Activated T-helper 2 cell treated with anti-CD3 and anti-CD28 coated beads, Interferon-gamma antibody, Interleukin-2, Interleukin-4, amounts not matched to agents 10 μg/mL and 5 μg/mL and 100 μg/mL, durations not matched to agents 14 hours and 24 hours and 36 hours (primary cell): ENCODE measurements at regions of chr15 and their contacts with region 1.

Region 1: DNA sequence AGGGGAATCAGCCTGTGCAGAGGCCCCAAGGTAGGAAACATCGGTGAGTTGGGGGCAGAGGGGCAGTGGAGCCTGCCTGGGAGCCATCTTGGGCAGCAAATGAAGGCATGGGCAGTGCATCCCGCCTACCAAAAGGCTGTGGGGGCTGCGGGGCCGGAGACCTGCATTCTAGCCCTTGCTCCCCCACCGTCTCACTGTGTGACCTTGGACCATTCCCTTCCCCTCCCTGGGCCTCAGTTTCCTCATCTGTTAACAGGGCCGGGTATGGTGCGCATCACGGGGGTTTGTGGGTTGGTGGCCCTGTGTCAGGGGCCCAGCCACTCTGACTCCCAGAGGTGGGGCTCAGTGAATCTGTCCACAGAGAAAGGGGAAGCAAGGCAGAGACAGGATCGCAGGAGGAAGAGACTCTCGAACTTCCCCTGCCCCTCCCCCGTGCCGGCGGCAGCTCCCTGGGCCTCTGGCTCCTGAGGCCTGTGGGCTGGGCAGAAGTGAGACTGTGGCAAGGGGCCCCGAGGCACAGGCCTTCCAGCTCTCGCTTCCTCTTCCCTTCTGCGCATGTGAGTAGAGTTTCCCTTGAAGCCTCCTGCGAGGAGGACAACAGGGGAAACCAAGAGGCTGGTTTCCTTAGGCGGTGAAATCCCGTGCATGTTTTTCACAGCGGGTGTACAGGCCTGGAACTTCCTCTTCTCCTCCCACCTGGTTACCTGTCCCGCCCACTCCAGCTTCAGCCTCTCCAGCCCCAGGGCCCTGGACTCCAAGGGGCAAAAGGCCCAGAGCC is 42.9 kb downstream of the IDH2 start:
- DNase-seq: peak; percentile 67
- H3K4me3 Mint-ChIP-seq: no peak overlapping the region
- H3K27ac Mint-ChIP-seq: peak overlapping the region; percentile 78
- H3K4me1 Mint-ChIP-seq: peaks cover 42% of the 10 kb centered on the region
- H3K27me3 Mint-ChIP-seq: no peaks in the 10 kb centered on the region

Region 2: DNA sequence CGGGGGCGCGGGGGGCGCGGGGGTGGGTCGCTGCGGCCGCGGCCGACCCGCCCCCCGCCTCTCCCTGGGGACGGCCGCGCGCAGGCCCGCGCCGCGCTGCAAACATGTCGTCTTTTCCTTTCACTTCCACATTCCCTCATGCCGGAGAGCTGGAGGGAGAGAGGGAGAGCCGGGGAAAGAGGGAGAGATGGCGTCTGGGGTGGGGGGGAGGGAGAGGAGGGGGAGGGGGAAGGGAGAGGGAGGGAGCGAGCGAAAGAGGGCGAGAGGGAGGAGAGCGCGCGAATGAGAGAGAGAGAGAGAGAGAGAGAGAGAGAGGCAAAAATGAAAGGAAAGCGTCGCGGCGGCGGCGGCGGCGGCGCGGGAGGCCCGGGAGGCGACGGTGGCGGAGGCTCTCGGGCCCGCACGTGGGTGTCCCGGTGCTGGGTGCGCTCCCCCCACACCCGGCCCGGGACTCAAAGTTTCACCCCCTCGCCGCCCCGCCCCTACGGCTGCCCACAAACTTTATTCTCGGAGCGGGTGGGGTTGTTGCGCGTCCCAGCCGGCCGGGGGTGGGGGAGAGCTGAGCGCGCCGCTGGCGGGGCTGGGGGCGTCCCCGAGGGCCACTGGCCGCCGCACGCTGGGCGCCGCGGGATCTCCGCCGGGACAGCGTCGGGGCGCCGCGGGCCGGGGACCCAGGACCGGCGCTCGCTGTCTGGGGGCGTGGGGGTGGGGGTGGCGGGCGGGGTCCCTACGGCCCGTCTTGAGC is 57.5 kb before region 1 on chr15:
- intact Hi-C with region 1: loop called (anchors 1 kb)
- DNase-seq: peak; percentile 60
- H3K4me3 Mint-ChIP-seq: peak overlapping the region; percentile 85
- H3K27ac Mint-ChIP-seq: peak overlapping the region; percentile 87
- H3K4me1 Mint-ChIP-seq: peaks cover 50% of the 10 kb centered on the region
- H3K27me3 Mint-ChIP-seq: no peaks in the 10 kb centered on the region

Region 3: DNA sequence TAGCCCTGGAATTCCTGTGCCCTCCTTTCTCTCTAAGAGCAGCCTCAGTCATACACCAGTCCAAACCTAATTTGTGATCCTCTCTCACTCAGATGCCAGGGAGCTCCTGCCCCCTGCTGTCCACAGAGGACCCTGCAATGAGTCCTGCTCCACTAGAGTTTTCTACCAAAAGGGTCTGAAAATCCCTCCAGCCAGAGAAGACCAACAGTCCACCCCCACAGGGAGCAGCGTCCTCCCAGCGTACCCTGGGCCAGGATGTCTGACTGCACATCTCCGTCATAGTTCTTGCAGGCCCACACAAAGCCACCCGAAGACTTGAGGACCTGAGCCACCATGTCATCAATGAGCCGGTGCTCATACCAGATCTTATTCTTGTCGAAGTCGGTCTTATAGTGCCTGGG is 27.5 kb after region 1 on chr15:
- intact Hi-C with region 1: loop called (anchors 1 kb)
- DNase-seq: no peak
- H3K4me3 Mint-ChIP-seq: no peak overlapping the region
- H3K27ac Mint-ChIP-seq: no peak overlapping the region
- H3K4me1 Mint-ChIP-seq: peaks cover 9% of the 10 kb centered on the region
- H3K27me3 Mint-ChIP-seq: no peaks in the 10 kb centered on the region

Region 4: DNA sequence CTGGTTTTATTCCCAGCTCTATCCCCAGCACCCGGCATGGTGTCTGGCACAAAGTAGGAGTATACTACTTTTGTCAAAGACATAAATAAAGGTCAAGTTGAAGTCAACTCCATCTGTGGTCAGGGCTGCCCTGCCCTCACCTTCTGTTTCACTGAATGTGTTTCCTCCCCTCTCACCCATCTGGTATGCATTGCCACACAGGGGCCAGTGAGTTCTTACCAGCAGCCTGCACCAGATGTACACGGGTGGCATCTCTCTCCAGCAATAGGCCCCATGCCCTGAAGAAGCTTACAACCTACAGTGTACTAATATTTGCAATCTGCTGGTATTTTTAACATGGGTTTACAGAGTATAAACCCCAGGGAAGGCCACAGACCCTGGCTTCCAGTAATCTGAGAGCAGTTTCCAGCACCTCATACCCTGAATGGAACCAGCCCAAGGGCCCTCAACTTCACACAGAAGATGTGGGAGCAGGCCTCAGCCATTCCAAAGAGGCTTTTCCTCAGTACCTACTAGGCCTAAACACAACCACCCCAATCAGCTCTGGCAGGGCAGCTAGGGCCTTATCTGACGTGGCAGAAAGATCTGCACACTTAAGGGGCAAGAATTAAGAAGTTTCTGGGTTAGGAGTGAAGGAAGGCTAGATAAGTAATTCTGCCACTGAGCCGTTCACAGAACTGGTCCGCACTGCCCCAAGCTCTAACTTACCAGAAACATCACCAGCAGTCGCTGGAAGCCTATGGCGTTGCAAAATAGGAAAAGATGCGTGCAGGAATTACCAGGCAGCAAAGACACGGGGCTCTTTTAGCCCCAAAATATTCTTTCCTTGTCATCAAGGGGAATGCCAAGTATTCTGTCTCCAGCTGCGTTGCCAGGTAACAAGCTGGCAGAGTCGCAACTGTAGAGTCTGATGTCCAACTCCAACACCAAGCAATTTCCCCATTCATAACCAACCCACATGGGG is 40.8 kb after region 1 on chr15:
- intact Hi-C with region 1: loop called (anchors 2 kb)
- DNase-seq: no peak
- H3K4me3 Mint-ChIP-seq: peak overlapping the region; percentile 90
- H3K27ac Mint-ChIP-seq: peak overlapping the region; percentile 91
- H3K4me1 Mint-ChIP-seq: peaks cover 67% of the 10 kb centered on the region
- H3K27me3 Mint-ChIP-seq: peaks cover 7% of the 10 kb centered on the region